ENCODE measurements at regions of chr2 and their contacts with region 1.

Region 1: GRCh38 chr2:241271641-241272297 is 43.7 kb downstream of the HDLBP start:
- DNase-seq: peak; percentile 90
- H3K4me3 ChIP-seq: peak overlapping the region; percentile 97
- H3K27ac ChIP-seq: peak overlapping the region; percentile 85
- H3K4me1 ChIP-seq: peaks cover 11% of the 10 kb centered on the region
- H3K27me3 ChIP-seq: no peaks in the 10 kb centered on the region
- CTCF ChIP-seq: no peak

Region 2: DNA sequence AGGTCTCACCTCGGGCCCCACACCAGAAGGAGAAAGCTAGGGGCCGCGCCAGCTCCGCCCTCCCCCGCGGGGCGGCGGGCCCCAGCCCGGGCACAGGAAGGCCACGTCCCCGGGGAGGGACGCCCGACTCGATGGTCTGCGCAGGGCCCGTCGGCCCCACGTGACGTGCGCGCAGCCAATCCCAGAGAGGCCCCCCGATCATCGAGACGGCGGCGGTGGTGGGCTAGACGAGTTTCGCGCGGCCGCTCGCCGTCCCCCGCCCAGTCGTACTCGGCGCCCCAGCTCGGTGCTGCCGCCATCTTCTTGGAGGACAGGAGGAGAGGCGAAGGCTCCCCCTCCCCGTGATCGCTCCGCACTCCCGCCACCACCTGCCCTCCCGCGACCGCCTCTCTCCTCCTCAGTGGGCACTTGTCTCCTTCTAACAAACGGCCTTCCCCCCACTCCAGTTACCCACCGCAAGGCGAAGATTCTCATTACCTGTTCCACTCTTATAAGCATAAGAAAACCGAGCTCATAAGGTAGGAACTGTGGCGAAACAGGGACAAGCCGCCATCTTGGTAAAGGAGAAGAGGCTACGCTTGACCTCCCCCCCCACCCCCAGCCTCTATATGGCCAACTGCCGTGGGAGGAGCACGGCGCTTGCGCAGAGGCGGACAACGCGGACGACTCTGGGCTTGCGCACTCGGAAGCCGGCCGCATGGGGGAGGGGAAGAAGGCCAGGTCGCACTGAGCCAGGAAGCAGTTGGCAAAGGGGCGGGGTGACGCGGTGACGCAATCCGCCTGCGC is 43.5 kb after region 1 on chr2 and contains the start of gene HDLBP:
- intact Hi-C with region 1: loop called (anchors 2 kb)
- DNase-seq: peak; percentile 100
- H3K4me3 ChIP-seq: peak within 1 kb of the TSS; percentile 82
- H3K27ac ChIP-seq: peak within 1 kb of the TSS; percentile 94
- H3K4me1 ChIP-seq: no peaks in the 10 kb centered on the region
- H3K27me3 ChIP-seq: no peaks in the 10 kb centered on the region
- CTCF ChIP-seq: no peak
- total RNA-seq, gene HDLBP: 483 to 625 TPM

Region 3: DNA sequence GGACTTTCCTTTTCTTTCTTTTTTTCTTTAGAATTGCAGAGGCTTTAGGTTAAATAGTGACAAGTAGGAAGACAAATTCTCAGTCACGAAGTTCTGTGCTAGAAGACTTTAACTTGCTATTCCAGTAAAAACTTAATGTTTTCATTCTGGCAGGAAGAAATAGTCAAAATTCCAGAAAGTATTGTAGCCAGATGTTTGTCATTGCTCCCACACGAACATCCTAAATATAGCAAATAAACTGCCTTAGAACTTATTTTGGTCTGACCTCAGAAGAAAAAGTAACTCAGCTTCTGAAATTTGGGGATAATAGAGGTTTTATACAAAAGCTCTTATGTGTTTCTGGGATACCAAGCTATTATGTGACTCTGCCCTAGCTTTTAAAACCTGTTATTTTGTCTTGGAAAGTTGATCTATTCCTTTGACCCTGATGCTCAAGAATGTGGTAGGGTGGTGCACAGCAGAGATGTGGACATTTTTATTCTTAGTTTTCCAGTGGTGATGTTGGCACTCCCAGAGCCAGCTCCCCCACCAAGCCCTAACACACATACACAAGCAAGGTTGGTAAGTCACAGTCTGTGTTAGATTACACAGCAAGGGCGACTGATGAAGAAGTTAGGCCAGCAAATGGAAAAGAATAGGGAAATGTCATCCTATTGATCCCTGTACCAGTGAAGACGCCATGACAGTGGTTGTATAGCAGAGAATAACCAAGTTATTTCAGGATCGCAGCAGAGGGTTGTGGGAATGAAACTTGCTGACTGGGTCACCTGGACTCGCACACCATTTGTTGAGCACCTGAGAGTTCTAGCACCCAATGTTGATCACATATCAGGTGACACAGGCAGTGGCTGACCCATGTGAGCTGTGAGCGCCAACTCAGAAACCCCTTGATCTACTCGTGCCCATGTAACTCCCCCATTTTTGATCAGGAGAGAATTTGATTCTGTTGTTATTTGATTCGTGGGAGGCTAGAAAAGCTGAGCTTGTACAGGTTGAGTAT is 108.0 kb after region 1 on chr2:
- intact Hi-C with region 1: no loop called
- DNase-seq: no peak
- H3K4me3 ChIP-seq: no peak overlapping the region
- H3K27ac ChIP-seq: no peak overlapping the region
- H3K4me1 ChIP-seq: peaks cover 4% of the 10 kb centered on the region
- H3K27me3 ChIP-seq: no peaks in the 10 kb centered on the region
- CTCF ChIP-seq: no peak